ENCODE measurements at regions of chr4 and their contacts with region 1.

Region 1: DNA sequence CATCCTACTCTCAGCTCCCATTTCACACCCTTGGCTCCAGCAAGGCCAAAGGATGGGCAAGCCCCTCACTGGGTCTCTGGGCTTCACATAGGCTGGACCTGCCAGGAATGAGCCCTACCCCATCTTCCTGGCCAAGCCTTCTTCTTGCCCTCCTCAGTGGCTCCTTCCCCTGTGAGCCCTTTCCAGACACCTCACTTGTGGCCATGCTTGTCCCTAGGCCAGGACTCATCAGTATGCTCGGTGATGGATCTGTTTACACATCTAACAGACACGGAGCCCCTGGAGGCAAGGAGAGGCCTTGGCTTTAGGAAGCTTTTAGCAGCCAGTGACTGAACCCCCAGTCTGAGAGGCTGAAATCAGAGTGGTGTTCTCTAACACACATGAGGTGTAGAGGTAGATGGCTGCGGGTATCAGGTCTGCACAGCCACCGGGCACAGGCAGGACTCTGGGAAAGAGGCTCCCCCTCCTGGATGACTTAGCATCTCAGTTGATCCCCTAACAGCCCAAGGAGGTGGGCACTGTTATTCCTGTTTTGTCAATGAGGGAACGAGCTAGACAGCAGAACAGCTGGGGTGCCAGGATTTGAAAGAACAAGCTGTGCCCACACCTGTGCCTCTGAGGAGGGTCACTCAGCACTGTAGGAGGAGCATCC is 44.8 kb downstream of the PPP2R2C start:
- DNase-seq: no peak
- H3K4me3 ChIP-seq: no peak overlapping the region
- H3K27ac ChIP-seq: no peak overlapping the region
- H3K4me1 ChIP-seq: no peaks in the 10 kb centered on the region
- H3K27me3 ChIP-seq: no peaks in the 10 kb centered on the region
- CTCF ChIP-seq: no peak

Region 2: GRCh38 chr4:6349896-6350603 is 77.5 kb before region 1 on chr4:
- CTCF ChIA-PET with region 1: no interaction called
- dilution Hi-C with region 1: loop called (anchors 5 kb)
- in situ Hi-C with region 1: no loop called
- intact Hi-C with region 1: no loop called
- DNase-seq: no peak
- H3K4me3 ChIP-seq: no peak overlapping the region
- H3K27ac ChIP-seq: no peak overlapping the region
- H3K4me1 ChIP-seq: no peaks in the 10 kb centered on the region
- H3K27me3 ChIP-seq: peaks cover 2% of the 10 kb centered on the region
- CTCF ChIP-seq: no peak

Measured in mammary epithelial cell (primary cell).